GM12878 (cell line): ENCODE measurements at regions of chr11 and their contacts with region 1.

Region 1: DNA sequence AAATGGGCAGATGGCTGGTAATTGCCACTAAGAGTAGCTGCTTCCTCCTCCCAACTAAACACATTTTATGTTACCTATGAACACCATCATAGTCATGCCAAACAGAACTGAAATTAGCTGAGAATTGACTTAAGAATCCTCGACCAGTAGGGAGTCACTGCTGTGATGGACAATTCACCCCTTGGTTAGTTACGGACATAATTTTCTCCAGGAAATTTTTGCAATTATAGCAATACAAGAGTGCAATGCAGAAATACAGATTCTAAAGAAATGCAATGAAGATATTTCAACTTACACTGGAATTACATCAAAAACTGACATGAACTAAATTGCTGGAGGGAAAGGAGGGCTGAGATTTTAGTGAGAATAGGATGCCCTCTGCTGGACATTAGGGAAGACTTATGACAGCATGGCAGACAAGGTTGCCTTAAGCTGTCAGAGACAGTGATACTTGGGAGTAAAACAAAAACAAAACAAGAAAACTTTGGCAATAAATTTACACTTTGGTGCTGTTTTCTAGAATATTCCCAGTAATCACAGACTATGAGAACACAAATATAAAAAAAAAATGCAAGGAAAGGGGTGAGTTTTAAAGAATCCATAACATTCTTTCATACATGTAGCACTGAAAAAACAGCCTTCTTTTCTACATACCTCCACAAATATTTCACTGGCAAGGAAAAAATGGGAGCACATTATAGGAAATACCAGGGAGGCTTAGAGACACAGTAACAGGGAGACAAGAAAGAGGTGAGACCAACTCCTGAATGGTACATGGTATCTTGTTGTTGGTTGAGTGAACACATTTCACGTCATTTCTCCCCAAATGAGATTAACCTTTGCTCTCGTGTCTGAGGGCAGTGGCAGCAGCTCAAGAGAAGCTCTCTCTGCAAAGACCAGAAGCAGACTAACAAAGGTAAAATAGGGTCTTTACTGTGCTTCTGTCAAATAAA is 11.2 kb upstream of the PPP2R1B start:
- DNase-seq: peak; percentile 52
- ATAC-seq: peak; percentile 92
- H3K4me3 ChIP-seq: no peak overlapping the region
- H3K27ac ChIP-seq: peak overlapping the region; percentile 68
- H3K4me1 ChIP-seq: peaks cover 8% of the 10 kb centered on the region; the same call in 1 of the 2 replicates
- H3K27me3 ChIP-seq: no peaks in the 10 kb centered on the region
- CTCF ChIP-seq: peak; percentile 65 to 86 (median 79)
- EP300 ChIP-seq: no peak
- POLR2A ChIP-seq: no peak
- RAD21 ChIP-seq: peak; percentile 88

Region 2: DNA sequence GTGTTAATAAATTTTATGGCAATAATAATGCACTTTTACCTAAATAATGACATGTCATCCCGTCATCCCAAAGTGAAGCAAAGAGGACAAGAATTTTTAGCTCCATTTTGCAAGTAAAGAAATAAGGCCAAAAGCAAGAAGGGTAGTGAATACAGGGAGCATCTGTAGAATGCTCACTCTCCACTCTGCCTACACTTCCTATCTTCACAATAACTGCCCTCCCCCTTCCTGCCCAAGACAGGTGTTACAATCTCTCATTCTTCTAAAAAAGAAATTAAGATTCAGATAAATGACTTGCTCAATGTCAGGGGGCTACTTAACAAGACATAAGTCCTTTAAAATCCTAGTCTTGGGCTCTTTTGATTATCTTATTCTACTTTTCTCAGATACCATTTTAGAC is 1489.8 kb before region 1 on chr11:
- CTCF ChIA-PET with region 1: no interaction called
- POLR2A ChIA-PET with region 1: no interaction called
- RAD21 ChIA-PET with region 1: no interaction called
- SMC1A ChIA-PET with region 1: no interaction called
- in situ Hi-C with region 1: no loop called
- intact Hi-C with region 1: loop called (anchors 10 kb)
- DNase-seq: no peak
- ATAC-seq: peak; percentile 65
- H3K4me3 ChIP-seq: no peak overlapping the region
- H3K27ac ChIP-seq: no peak overlapping the region
- H3K4me1 ChIP-seq: no peaks in the 10 kb centered on the region
- H3K27me3 ChIP-seq: no peaks in the 10 kb centered on the region
- CTCF ChIP-seq: no peak
- EP300 ChIP-seq: no peak
- POLR2A ChIP-seq: no peak
- RAD21 ChIP-seq: no peak

Region 3: DNA sequence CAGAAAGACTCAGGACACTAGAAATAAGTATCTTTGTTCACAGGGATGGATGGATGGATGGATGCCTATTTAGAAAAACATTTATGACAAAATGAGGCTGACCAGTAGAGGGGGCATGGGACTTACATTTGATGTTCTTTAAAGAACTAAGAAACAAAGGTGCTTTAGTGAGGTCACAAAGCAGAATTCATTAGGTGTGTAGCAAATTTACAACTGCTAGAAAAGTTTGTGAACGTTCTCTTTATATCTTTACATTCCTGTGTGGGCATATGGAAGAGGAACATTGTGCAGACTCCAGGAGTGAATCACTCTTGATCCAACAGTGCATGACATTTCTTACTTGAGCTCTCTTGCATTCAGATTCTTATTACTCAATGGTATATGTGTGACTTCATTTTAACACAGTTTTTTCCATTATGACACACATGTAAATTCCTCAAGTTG is 191.0 kb before region 1 on chr11:
- CTCF ChIA-PET with region 1: interaction called, 94 read pairs
- POLR2A ChIA-PET with region 1: interaction called, 4 read pairs
- RAD21 ChIA-PET with region 1: interaction called, 65 read pairs
- SMC1A ChIA-PET with region 1: interaction called, 54 read pairs
- in situ Hi-C with region 1: no loop called
- intact Hi-C with region 1: loop called (anchors 1 kb)
- DNase-seq: no peak
- ATAC-seq: peak; percentile 84
- H3K4me3 ChIP-seq: no peak overlapping the region
- H3K27ac ChIP-seq: no peak overlapping the region
- H3K4me1 ChIP-seq: no peaks in the 10 kb centered on the region; the same call in 1 of the 2 replicates
- H3K27me3 ChIP-seq: no peaks in the 10 kb centered on the region; a peak in 1 of 4 replicates
- CTCF ChIP-seq: peak; percentile 53 to 74 (median 67)
- EP300 ChIP-seq: no peak
- POLR2A ChIP-seq: no peak
- RAD21 ChIP-seq: peak; percentile 79

Region 4: DNA sequence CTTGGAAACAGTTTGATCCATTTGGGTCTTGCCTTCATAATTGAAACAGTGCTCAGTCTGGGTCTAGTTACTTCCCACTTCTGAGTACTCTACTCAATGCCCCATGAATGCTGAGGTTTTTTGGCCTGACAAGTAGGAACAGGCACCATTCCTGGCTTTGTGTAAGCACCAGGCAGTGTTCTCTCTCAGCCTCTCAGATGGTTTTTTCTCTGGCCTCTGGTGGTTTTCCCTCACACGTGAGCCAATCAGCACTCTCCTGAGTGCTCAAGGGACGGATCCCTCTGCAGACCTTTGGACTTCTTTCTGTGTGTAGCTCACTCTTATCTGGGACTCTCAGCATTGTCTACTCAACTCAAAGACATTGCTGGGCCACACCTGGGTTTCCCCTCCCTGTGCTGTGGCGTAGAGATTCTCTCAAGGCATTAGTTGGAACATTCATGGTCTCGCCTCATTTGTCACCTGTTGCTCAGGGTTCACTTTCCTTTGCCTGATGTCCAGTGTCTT is 153.8 kb before region 1 on chr11:
- CTCF ChIA-PET with region 1: interaction called, 11 read pairs
- POLR2A ChIA-PET with region 1: interaction called, 3 read pairs
- RAD21 ChIA-PET with region 1: interaction called, 4 read pairs
- SMC1A ChIA-PET with region 1: interaction called, 6 read pairs
- in situ Hi-C with region 1: no loop called
- intact Hi-C with region 1: no loop called
- DNase-seq: peak; percentile 60
- ATAC-seq: peak; percentile 99
- H3K4me3 ChIP-seq: no peak overlapping the region
- H3K27ac ChIP-seq: peak overlapping the region; percentile 12; the same call in 1 of the 2 replicates
- H3K4me1 ChIP-seq: no peaks in the 10 kb centered on the region
- H3K27me3 ChIP-seq: no peaks in the 10 kb centered on the region
- CTCF ChIP-seq: no peak
- EP300 ChIP-seq: 0 out of 4 replicates have a peak, but pooled peaks of 1 of the 2 experiments have one; percentile 15
- POLR2A ChIP-seq: no peak
- RAD21 ChIP-seq: no peak

Region 5: DNA sequence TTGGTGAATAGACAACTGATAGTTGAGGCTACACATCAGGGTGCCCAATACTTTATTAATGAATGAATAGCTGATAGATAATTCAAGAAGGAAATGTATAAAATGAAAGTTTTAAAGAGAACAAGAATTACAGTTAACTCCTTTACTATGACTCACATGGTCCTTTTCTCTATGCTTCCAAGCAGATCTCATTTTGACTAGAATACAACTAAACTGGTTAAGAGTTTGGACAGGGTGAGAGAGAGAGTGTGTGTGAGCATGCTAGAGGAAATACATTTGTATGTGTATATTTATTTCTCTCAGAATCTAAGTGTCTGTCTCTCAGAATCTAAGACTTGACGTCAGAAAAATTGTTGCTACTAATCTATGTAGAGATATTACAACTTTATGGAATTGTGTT is 108.4 kb before region 1 on chr11:
- CTCF ChIA-PET with region 1: no interaction called
- POLR2A ChIA-PET with region 1: no interaction called
- RAD21 ChIA-PET with region 1: no interaction called
- SMC1A ChIA-PET with region 1: no interaction called
- in situ Hi-C with region 1: no loop called
- intact Hi-C with region 1: no loop called
- DNase-seq: no peak
- ATAC-seq: no peak
- H3K4me3 ChIP-seq: no peak overlapping the region
- H3K27ac ChIP-seq: no peak overlapping the region
- H3K4me1 ChIP-seq: no peaks in the 10 kb centered on the region
- H3K27me3 ChIP-seq: no peaks in the 10 kb centered on the region
- CTCF ChIP-seq: no peak
- EP300 ChIP-seq: no peak
- POLR2A ChIP-seq: no peak
- RAD21 ChIP-seq: no peak

Region 6: DNA sequence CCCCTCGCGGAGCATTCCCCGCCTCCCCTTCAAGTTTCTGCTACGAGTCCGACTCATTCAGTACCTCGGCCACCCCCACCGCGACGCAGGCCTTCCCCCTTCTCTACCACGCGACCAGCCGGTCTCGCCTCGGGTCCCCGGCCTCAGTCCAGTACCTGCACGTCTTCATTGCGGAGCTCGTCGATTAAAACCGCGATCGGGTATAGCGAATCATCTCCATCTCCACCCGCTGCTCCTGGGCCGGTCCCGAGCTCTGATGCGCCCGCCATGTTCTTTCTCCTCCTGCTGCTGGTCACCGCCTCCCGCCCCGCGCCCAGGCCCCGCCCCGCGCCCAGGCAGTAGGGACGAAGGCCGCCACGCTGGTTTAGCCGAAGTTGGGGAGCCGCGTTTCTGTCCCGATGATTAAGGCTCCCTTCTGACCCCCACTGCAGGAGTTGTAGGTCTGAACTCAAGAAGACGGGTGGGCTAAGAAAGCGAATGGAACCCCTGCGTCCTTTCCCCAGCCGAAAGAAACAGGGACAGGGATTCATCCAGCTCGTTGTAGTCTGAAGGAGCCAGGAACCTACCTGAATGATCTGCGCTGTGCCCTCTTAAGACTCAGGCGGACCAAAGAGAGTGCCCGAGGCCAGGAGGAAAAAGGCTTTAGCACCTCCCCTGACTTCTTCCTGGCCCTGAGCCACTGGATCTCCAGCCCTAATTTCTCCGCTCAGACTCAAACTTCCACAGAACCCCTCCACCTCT is 11.1 kb before region 1 on chr11 and contains the start of gene PPP2R1B:
- CTCF ChIA-PET with region 1: interaction called, 170 read pairs
- POLR2A ChIA-PET with region 1: interaction called, 56 read pairs
- RAD21 ChIA-PET with region 1: interaction called, 136 read pairs
- SMC1A ChIA-PET with region 1: interaction called, 154 read pairs
- in situ Hi-C with region 1: no loop called
- intact Hi-C with region 1: no loop called
- DNase-seq: peak; percentile 35
- ATAC-seq: peak; percentile 97
- H3K4me3 ChIP-seq: peak within 1 kb of the TSS; percentile 78
- H3K27ac ChIP-seq: peak within 1 kb of the TSS; percentile 77
- H3K4me1 ChIP-seq: no peaks in the 10 kb centered on the region; the same call in 1 of the 2 replicates
- H3K27me3 ChIP-seq: no peaks in the 10 kb centered on the region
- CTCF ChIP-seq: no peak
- EP300 ChIP-seq: no peak
- POLR2A ChIP-seq: peak; percentile 89
- RAD21 ChIP-seq: no peak
- polyA plus RNA-seq, gene PPP2R1B: 28.5 to 37.0 TPM

Region 7: DNA sequence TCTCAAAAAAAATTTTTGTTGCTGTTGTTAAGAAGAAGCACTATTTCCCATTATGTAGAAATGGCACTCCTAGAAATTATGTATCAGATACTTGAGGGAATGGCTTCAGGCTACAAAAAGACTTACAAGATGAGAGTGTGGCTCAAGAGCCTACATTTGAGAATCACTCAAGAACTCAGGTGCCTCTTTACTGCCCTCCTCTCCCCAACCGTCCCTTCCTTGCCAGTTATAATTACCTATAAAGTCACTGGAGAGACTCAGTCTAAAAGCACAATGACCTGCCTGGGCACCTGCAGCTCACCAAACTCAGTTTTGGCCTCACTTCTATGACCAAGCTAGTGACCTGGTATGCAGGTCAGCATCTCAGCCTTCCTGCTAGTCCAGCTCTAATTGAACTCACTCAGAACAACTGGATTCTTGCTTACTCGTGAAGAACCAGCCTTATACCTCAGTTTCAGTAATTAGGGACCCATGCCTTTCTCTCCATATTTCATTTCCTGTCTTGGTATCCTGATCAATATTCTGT is 30.8 kb after region 1 on chr11:
- CTCF ChIA-PET with region 1: interaction called, 3 read pairs
- POLR2A ChIA-PET with region 1: no interaction called
- RAD21 ChIA-PET with region 1: no interaction called
- SMC1A ChIA-PET with region 1: interaction called, 13 read pairs
- in situ Hi-C with region 1: no loop called
- intact Hi-C with region 1: no loop called
- DNase-seq: no peak
- ATAC-seq: no peak
- H3K4me3 ChIP-seq: no peak overlapping the region
- H3K27ac ChIP-seq: no peak overlapping the region
- H3K4me1 ChIP-seq: no peaks in the 10 kb centered on the region
- H3K27me3 ChIP-seq: no peaks in the 10 kb centered on the region
- CTCF ChIP-seq: no peak
- EP300 ChIP-seq: no peak
- POLR2A ChIP-seq: no peak
- RAD21 ChIP-seq: no peak

Region 8: GRCh38 chr11:111846636-111847035 is 69.3 kb after region 1 on chr11:
- CTCF ChIA-PET with region 1: interaction called, 63 read pairs
- POLR2A ChIA-PET with region 1: interaction called, 3 read pairs
- RAD21 ChIA-PET with region 1: interaction called, 25 read pairs
- SMC1A ChIA-PET with region 1: interaction called, 72 read pairs
- in situ Hi-C with region 1: no loop called
- intact Hi-C with region 1: loop called (anchors 1 kb)
- DNase-seq: no peak
- ATAC-seq: no peak
- H3K4me3 ChIP-seq: no peak overlapping the region
- H3K27ac ChIP-seq: no peak overlapping the region
- H3K4me1 ChIP-seq: no peaks in the 10 kb centered on the region
- H3K27me3 ChIP-seq: no peaks in the 10 kb centered on the region
- CTCF ChIP-seq: no peak
- EP300 ChIP-seq: no peak
- POLR2A ChIP-seq: no peak
- RAD21 ChIP-seq: no peak